Transverse colon (tissue), 4 donors: ENCODE measurements at regions of chr10 and their contacts with region 1.

Region 1: GRCh38 chr10:93702211-93703001 is at the start of gene FRA10AC1:
- DNase-seq: peak; percentile 93
- H3K4me3 ChIP-seq: peak within 1 kb of the TSS; percentile 51 to 82 (median 60)
- H3K27ac ChIP-seq: peak within 1 kb of the TSS; percentile 86 to 89 (median 86)
- H3K4me1 ChIP-seq: peaks cover 0 to 22% (median 12%) of the 10 kb centered on the region in 4 donors
- H3K27me3 ChIP-seq: no peaks in the 10 kb centered on the region
- CTCF ChIP-seq: peak; percentile 45 to 69 (median 48)
- EP300 ChIP-seq: no peak
- POLR2A ChIP-seq: peak; percentile 49
- total RNA-seq, gene FRA10AC1: 1.9 to 37.4 (median 13.9) TPM

Region 2: DNA sequence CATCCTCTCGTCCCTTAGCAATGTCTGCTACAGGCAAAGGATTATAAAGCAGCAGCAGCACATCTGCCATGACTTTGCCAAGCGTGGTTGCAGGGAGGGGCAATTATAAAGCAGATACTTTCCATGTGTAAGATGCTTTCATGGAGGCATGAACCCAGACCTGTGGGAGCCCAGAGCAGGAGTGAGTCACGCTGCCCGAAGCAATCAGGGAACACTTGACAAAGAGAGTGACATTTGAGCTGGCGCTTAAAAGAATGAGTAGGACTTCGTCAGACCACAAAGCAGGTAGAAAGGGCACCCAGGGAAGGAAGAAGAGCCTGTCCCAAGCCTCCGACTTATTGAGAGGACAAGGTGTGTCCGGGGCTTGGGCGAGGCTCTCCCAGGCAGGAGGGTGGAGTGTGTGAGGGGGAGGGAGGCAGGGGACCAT is 367.5 kb before region 1 on chr10:
- in situ Hi-C with region 1: no loop called
- intact Hi-C with region 1: no loop called
- DNase-seq: no peak
- H3K4me3 ChIP-seq: no peak overlapping the region
- H3K27ac ChIP-seq: no peak overlapping the region
- H3K4me1 ChIP-seq: no peaks in the 10 kb centered on the region
- H3K27me3 ChIP-seq: no peaks in the 10 kb centered on the region
- CTCF ChIP-seq: no peak
- EP300 ChIP-seq: no peak
- POLR2A ChIP-seq: no peak

Region 3: GRCh38 chr10:93749218-93749799 is 46.9 kb after region 1 on chr10:
- in situ Hi-C with region 1: no loop called
- intact Hi-C with region 1: loop called (anchors 1 kb)
- DNase-seq: peak; percentile 28
- H3K4me3 ChIP-seq: no peak overlapping the region
- H3K27ac ChIP-seq: peak overlapping the region in 2 of 4 donors; percentile 6 to 13
- H3K4me1 ChIP-seq: peaks cover 0 to 26% (median 9%) of the 10 kb centered on the region in 4 donors
- H3K27me3 ChIP-seq: no peaks in the 10 kb centered on the region
- CTCF ChIP-seq: no peak
- EP300 ChIP-seq: no peak
- POLR2A ChIP-seq: no peak

Region 4: GRCh38 chr10:93816123-93816747 is 113.8 kb after region 1 on chr10:
- in situ Hi-C with region 1: loop called in 2 of 4 experiments (anchors 10 kb)
- intact Hi-C with region 1: loop called (anchors 5 kb)
- DNase-seq: peak; percentile 72
- H3K4me3 ChIP-seq: no peak overlapping the region
- H3K27ac ChIP-seq: no peak overlapping the region
- H3K4me1 ChIP-seq: peaks cover 6 to 34% (median 14%) of the 10 kb centered on the region in 4 donors
- H3K27me3 ChIP-seq: peaks cover 4% of the 10 kb centered on the region
- CTCF ChIP-seq: peak; percentile 65 to 81 (median 77)
- EP300 ChIP-seq: no peak
- POLR2A ChIP-seq: no peak